ENCODE measurements at regions of chr1 and their contacts with region 1.

Region 1: GRCh38 chr1:112390775-112391602 is 5.0 kb upstream of the CTTNBP2NL start:
- DNase-seq: peak; percentile 91
- H3K4me3 ChIP-seq: peak overlapping the region; percentile 6 to 58 (median 29)
- H3K27ac ChIP-seq: peak overlapping the region; percentile 100
- H3K4me1 ChIP-seq: peaks cover 75% of the 10 kb centered on the region
- H3K27me3 ChIP-seq: no peaks in the 10 kb centered on the region
- CTCF ChIP-seq: peak; percentile 87 to 97
- POLR2A ChIP-seq: peak; percentile 69

Region 2: DNA sequence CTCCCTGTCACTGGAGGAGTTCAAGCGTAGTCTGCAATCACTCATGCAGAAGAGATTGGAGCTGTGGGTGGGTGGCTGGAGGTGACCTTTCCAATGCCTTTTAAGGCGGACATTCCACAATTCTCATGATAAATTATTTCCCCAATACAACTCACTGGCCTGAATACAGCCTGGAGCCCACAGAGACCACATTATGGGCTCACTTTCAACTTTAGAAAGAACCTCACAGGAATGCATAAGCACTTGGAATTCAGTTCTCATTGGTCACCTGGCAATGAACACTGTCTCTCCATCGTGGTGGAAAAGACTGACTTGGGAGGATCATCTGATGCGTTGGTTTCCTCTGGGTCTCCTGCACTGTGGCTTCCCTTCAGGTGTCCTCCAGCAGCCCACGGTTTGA is 249.7 kb before region 1 on chr1:
- CTCF ChIA-PET with region 1: no interaction called
- POLR2A ChIA-PET with region 1: no interaction called
- dilution Hi-C with region 1: no loop called
- intact Hi-C with region 1: no loop called
- DNase-seq: no peak
- H3K4me3 ChIP-seq: no peak overlapping the region
- H3K27ac ChIP-seq: no peak overlapping the region
- H3K4me1 ChIP-seq: no peaks in the 10 kb centered on the region
- H3K27me3 ChIP-seq: no peaks in the 10 kb centered on the region
- CTCF ChIP-seq: no peak
- POLR2A ChIP-seq: no peak

Region 3: DNA sequence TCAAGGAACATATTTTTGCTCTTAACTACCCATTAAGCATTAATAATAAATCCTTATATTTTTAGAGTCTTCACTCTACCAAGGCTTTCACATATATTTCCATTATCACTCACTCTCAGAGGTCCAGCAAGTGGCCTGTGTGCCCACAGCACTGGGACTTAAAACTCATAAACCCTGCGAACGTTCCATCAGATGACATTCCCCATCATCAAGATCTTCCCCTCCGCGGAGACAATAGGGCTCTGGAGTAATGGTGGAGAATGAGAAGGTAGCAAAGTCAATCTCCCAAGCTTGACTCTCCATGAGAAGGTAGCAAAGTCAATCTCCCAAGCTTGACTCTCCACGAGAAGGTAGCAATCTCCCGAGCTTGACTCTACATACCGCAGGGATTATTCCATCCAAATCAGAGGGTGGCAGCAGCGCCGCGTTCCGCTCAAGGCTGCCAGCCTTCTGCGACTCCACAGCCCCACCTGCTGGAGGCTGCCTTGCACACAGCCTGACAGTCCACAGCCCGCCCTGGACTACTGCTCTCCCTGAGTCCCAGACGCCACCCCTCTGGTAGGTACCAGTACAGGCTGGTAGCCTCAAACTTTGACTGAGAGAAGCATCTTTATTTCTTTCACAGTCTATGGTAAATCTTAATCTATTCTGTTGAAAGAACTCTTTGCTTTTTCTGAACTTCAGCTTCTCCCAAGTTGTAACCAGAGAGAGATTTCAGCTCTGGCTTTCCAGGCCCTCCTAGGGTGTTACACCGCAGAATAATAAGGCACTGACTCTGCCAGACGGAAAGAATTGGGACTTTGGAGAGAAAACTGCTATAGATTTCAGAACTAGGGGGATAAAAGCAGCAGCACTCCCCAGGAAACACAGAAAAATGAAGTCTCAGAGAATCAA is 21.4 kb before region 1 on chr1:
- CTCF ChIA-PET with region 1: interaction called, 25 read pairs
- POLR2A ChIA-PET with region 1: interaction called, 4 read pairs
- dilution Hi-C with region 1: no loop called
- intact Hi-C with region 1: loop called (anchors 2 kb)
- DNase-seq: peak; percentile 87
- H3K4me3 ChIP-seq: no peak overlapping the region
- H3K27ac ChIP-seq: no peak overlapping the region
- H3K4me1 ChIP-seq: no peaks in the 10 kb centered on the region
- H3K27me3 ChIP-seq: peaks cover 10 to 12% of the 10 kb centered on the region in 2 experiments
- CTCF ChIP-seq: peak; percentile 98 to 99
- POLR2A ChIP-seq: no peak

Region 4: DNA sequence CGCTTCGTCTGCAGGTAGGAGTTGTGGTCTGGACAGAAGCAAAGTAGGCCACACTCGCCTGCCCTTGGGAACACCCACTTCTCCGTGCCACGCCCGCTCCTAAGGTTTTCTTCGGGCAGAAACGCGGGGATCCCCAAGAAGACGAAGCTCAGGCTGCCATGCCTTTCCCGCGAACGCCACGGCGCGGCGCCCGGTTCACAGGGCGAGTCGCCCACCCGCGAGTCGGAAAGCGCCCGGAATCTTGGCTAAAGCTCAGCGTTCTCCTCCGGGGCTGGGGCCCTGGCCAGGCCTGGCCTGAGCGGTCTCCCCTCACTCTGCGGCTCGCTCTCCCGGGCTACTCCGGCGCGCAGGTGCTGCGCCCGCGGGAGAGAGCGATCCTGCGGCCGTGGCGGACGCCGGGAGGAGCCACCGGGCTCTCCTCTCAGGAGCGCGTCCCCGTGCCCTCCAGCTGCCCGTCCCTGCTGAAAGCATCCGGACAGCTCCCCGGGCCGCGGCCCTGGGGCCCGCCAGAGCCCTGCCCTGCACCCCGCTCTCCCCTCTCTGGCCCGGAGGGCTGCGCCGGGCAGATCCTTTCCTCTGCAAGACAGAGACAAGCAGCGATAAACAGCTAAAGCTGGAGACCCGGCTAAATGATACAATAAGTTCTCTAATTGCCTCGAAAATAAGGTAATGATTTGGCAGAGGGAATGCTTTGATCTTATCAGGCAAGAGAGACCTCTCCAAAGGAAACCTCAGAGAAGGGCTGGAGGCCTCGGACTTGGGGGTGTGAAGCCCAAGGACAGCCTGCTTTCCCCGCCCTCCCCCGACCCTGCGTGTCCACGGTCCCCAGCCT is 111.0 kb after region 1 on chr1:
- CTCF ChIA-PET with region 1: interaction called, 34 read pairs
- POLR2A ChIA-PET with region 1: interaction called, 3 read pairs
- dilution Hi-C with region 1: no loop called
- intact Hi-C with region 1: loop called (anchors 1 kb)
- DNase-seq: peak; percentile 71
- H3K4me3 ChIP-seq: peak overlapping the region; percentile 9 to 46 (median 38)
- H3K27ac ChIP-seq: no peak overlapping the region
- H3K4me1 ChIP-seq: peaks cover 6% of the 10 kb centered on the region
- H3K27me3 ChIP-seq: no peaks in the 10 kb centered on the region
- CTCF ChIP-seq: peak; percentile 69 to 90
- POLR2A ChIP-seq: no peak

Region 5: GRCh38 chr1:112674439-112674985 is 283.5 kb after region 1 on chr1 and contains the start of gene MOV10:
- CTCF ChIA-PET with region 1: interaction called, 53 read pairs
- POLR2A ChIA-PET with region 1: interaction called, 3 read pairs
- dilution Hi-C with region 1: no loop called
- intact Hi-C with region 1: loop called (anchors 1 kb)
- DNase-seq: peak; percentile 81
- H3K4me3 ChIP-seq: peak within 1 kb of the TSS; percentile 67 to 88 (median 82)
- H3K27ac ChIP-seq: peak within 1 kb of the TSS; percentile 69
- H3K4me1 ChIP-seq: peaks cover 21% of the 10 kb centered on the region
- H3K27me3 ChIP-seq: no peaks in the 10 kb centered on the region
- CTCF ChIP-seq: no peak
- POLR2A ChIP-seq: peak; percentile 56
- total RNA-seq, gene MOV10: 103 and 113 TPM in 2 replicates

Region 6: DNA sequence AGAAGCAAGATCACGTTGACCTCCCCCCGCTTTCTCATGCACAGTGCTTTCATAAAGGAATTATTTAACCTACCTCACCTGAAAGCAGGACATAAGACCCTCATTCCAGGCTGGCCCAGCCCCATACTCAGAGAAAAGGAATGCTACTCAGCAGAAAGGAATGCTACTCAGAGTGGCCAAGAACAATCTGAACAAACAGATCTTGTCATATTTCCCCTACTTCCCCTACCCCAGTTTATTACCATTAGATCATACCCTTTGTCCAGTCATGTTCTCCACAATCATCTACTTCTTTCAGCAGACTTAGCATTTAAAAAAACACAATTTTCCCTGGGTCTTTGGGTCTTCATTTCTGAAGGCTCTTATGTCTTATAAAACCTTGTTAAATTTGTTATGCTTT is 475.2 kb after region 1 on chr1:
- CTCF ChIA-PET with region 1: no interaction called
- POLR2A ChIA-PET with region 1: no interaction called
- dilution Hi-C with region 1: no loop called
- intact Hi-C with region 1: loop called (anchors 2 kb)
- DNase-seq: peak; percentile 94
- H3K4me3 ChIP-seq: no peak overlapping the region
- H3K27ac ChIP-seq: peak overlapping the region; percentile 97
- H3K4me1 ChIP-seq: peaks cover 43% of the 10 kb centered on the region
- H3K27me3 ChIP-seq: no peaks in the 10 kb centered on the region
- CTCF ChIP-seq: no peak
- POLR2A ChIP-seq: peak; percentile 76

Measured in endothelial cell of umbilical vein (primary cell).